ENCODE measurements at regions of chr2 and their contacts with region 1.

Region 1: GRCh38 chr2:46010925-46011490 is 286.2 kb upstream of the EPAS1 start:
- DNase-seq: peak; percentile 72
- H3K4me3 ChIP-seq: no peak overlapping the region
- H3K27ac ChIP-seq: no peak overlapping the region
- H3K4me1 ChIP-seq: peaks cover 16% of the 10 kb centered on the region
- H3K27me3 ChIP-seq: no peaks in the 10 kb centered on the region
- CTCF ChIP-seq: peak; percentile 32 to 57
- POLR2A ChIP-seq: no peak

Region 2: GRCh38 chr2:46029332-46029811 is 18.4 kb after region 1 on chr2:
- CTCF ChIA-PET with region 1: interaction called, 12 read pairs
- POLR2A ChIA-PET with region 1: no interaction called
- dilution Hi-C with region 1: no loop called
- intact Hi-C with region 1: loop called (anchors 1 kb)
- DNase-seq: peak; percentile 96
- H3K4me3 ChIP-seq: no peak overlapping the region
- H3K27ac ChIP-seq: peak overlapping the region; percentile 77
- H3K4me1 ChIP-seq: peaks cover 20% of the 10 kb centered on the region
- H3K27me3 ChIP-seq: no peaks in the 10 kb centered on the region
- CTCF ChIP-seq: peak; percentile 32 to 47
- POLR2A ChIP-seq: no peak

Region 3: DNA sequence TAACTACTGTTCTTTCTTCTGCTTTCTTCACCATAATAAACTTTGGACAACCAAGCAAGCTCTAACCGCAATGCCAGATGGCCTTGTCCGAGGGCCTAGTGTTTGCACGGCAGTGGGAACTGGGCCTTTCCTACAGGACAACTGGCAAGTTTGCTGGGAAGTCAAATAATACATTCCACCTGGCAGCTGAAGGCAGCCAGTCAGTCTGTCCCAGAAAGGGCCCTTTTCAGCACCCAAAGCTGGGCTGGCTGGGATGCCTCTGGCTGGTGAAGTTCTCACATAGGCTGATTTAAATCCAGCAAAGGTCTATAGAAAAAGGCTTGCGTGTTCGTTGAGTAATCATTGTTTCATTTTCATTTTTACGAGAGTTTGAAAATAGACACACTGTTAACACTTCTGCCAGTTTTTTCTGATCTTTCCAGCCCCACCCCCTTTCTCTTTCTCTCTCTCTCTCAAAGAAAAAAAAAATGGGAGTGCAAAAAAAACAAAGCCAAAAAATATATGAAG is 176.2 kb after region 1 on chr2:
- CTCF ChIA-PET with region 1: interaction called, 3 read pairs
- POLR2A ChIA-PET with region 1: no interaction called
- dilution Hi-C with region 1: no loop called
- intact Hi-C with region 1: loop called (anchors 5 kb)
- DNase-seq: peak; percentile 70
- H3K4me3 ChIP-seq: no peak overlapping the region
- H3K27ac ChIP-seq: no peak overlapping the region
- H3K4me1 ChIP-seq: peaks cover 7% of the 10 kb centered on the region
- H3K27me3 ChIP-seq: no peaks in the 10 kb centered on the region
- CTCF ChIP-seq: no peak
- POLR2A ChIP-seq: no peak

Region 4: DNA sequence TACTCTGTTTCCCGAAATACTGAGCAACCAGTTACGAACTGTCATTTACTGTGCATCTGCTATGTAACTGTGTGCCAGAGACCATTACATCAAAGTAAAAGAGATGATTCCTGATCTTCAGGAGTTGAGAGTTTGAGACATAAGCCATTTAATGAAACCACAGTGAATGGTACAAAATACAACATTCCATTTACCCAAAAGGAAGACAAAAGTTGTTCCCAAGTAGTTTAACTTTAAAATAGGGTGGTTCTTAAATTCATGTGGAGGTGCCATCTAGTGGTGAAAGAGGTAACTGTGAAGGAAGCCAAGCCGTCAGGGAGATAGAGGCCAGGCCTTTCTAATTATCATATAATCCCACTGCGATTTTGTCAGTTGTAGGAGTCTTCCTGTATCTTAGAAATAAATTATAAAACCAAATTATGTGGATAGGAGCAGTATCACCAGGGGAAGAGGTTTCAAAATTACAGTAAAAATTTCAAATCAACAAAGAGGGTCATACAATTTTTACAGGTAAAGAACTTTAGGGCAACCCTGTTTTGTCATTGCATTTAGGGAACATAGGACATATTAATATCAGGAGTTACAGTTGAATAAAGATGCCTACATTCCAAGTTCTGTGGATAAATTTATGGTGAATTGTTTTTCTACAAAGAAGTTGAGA is 353.9 kb after region 1 on chr2:
- CTCF ChIA-PET with region 1: interaction called, 23 read pairs
- POLR2A ChIA-PET with region 1: no interaction called
- dilution Hi-C with region 1: no loop called
- intact Hi-C with region 1: loop called (anchors 1 kb)
- DNase-seq: peak; percentile 70
- H3K4me3 ChIP-seq: no peak overlapping the region
- H3K27ac ChIP-seq: no peak overlapping the region
- H3K4me1 ChIP-seq: peaks cover 24% of the 10 kb centered on the region
- H3K27me3 ChIP-seq: no peaks in the 10 kb centered on the region
- CTCF ChIP-seq: peak; percentile 61 to 63
- POLR2A ChIP-seq: no peak

Region 5: DNA sequence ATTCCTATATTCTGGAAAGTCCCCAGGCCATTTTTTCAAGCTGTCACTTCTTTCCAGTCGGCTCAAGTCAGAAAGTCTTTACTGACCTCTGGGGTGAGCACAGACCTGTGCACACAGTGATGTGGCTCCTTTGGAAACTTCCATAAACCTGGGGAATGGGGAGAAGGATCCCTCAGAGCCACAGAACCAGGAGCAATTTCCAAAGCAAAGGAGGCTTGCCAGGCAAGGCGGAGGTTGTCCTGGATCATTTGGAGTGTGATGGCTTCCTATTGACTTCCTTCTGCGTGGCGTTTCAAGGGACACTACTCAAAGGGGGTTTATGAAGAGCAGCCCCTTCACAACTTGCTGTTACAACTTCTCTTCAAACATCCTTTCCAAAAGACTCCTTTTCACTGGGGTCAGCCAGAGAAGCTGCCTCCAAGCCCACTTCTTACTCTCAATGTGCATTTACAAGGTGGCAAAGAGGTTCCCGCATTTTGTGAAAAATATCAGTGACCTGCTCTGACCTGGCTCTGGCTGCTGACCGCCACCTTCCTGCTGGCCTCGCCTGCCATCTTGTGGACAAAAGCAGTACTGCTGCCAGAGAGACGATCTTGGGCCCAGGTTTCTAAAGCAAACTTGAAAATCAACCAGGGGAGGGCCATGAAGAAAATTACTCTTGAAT is 450.1 kb after region 1 on chr2:
- CTCF ChIA-PET with region 1: interaction called, 15 read pairs
- POLR2A ChIA-PET with region 1: no interaction called
- dilution Hi-C with region 1: no loop called
- intact Hi-C with region 1: loop called (anchors 1 kb)
- DNase-seq: peak; percentile 72
- H3K4me3 ChIP-seq: no peak overlapping the region
- H3K27ac ChIP-seq: no peak overlapping the region
- H3K4me1 ChIP-seq: no peaks in the 10 kb centered on the region
- H3K27me3 ChIP-seq: no peaks in the 10 kb centered on the region
- CTCF ChIP-seq: peak; percentile 93
- POLR2A ChIP-seq: no peak